ENCODE measurements at regions of chr1 and their contacts with region 1.

Region 1: GRCh38 chr1:43227143-43227764 is 42.5 kb upstream of the TMEM125 start:
- DNase-seq: peak; percentile 96
- ATAC-seq: peak; percentile 96
- H3K4me3 Mint-ChIP-seq: no peak overlapping the region
- H3K27ac Mint-ChIP-seq: no peak overlapping the region
- H3K4me1 Mint-ChIP-seq: peaks cover 20% of the 10 kb centered on the region
- H3K27me3 Mint-ChIP-seq: peaks cover 3% of the 10 kb centered on the region; the same call in 1 of the 2 replicates
- CTCF ChIP-seq: peak; percentile 93

Region 2: DNA sequence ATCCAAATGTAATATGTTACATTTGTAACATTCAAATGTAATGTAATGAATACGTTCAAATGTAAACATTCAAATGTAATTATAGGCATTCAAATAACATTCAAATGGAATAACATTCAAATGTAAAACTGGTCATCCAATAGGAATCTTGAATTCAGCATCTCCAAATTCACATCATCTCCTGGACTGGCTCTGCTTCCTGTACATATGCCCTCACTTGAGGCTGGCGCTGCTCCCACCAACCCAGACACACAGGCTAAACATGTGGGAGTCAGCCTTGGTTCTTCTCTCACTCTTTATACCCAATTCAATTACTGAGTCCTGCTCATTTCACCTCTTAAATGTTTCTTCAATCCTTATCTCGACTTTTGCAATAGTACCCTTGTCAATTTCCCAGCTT is 62.1 kb before region 1 on chr1:
- CTCF ChIA-PET with region 1: no interaction called
- POLR2A ChIA-PET with region 1: no interaction called
- DNase-seq: no peak
- ATAC-seq: no peak
- H3K4me3 Mint-ChIP-seq: no peak overlapping the region
- H3K27ac Mint-ChIP-seq: no peak overlapping the region
- H3K4me1 Mint-ChIP-seq: no peaks in the 10 kb centered on the region
- H3K27me3 Mint-ChIP-seq: no peaks in the 10 kb centered on the region
- CTCF ChIP-seq: no peak

Region 3: GRCh38 chr1:43197346-43198127 is 29.7 kb before region 1 on chr1:
- CTCF ChIA-PET with region 1: interaction called, 10 read pairs
- POLR2A ChIA-PET with region 1: interaction called, 3 read pairs
- DNase-seq: no peak
- ATAC-seq: peak; percentile 69
- H3K4me3 Mint-ChIP-seq: no peak overlapping the region
- H3K27ac Mint-ChIP-seq: no peak overlapping the region
- H3K4me1 Mint-ChIP-seq: peaks cover 3% of the 10 kb centered on the region; the same call in 1 of the 2 replicates
- H3K27me3 Mint-ChIP-seq: no peaks in the 10 kb centered on the region
- CTCF ChIP-seq: no peak

Region 4: GRCh38 chr1:43454266-43455011 is 227.2 kb after region 1 on chr1:
- CTCF ChIA-PET with region 1: interaction called, 14 read pairs
- POLR2A ChIA-PET with region 1: no interaction called
- DNase-seq: peak; percentile 73
- ATAC-seq: peak; percentile 88
- H3K4me3 Mint-ChIP-seq: peak overlapping the region; percentile 88
- H3K27ac Mint-ChIP-seq: peak overlapping the region; percentile 99
- H3K4me1 Mint-ChIP-seq: peaks cover 23% of the 10 kb centered on the region
- H3K27me3 Mint-ChIP-seq: peaks cover 30% of the 10 kb centered on the region
- CTCF ChIP-seq: no peak